Activated B cell treated with CpG ODN at 0.5 μM for 24 hours (primary cell): ENCODE measurements at regions of chr22 and their contacts with region 1.

Region 1: DNA sequence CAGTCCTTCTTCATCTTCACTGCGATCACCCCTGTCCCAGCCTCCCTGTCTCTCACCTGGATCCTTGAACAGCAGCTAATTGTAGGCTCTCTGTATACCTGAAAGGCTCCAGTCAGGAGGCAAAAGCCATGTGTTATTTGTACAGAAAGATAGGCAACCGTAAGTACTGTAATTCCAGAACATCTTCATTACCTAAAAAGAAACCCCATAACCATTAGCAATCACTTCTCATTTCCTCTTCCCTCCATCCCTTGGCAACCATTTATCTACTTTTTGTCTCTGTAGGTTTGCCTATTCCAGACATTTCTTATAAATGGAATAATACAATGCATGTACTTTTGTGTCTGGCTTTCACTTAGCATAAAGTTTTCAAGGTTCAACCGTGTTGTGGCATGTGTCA is 17.8 kb downstream of the NAGA start:
- DNase-seq: no peak
- ATAC-seq: no peak
- H3K4me3 Mint-ChIP-seq: no peak overlapping the region
- H3K27ac Mint-ChIP-seq: no peak overlapping the region
- H3K4me1 Mint-ChIP-seq: peaks cover 8% of the 10 kb centered on the region
- H3K27me3 Mint-ChIP-seq: no peaks in the 10 kb centered on the region
- CTCF ChIP-seq: no peak

Region 2: GRCh38 chr22:42016101-42016500 is 36.7 kb before region 1 on chr22:
- CTCF ChIA-PET with region 1: no interaction called
- POLR2A ChIA-PET with region 1: no interaction called
- intact Hi-C with region 1: loop called (anchors 5 kb)
- DNase-seq: no peak
- ATAC-seq: no peak
- H3K4me3 Mint-ChIP-seq: no peak overlapping the region
- H3K27ac Mint-ChIP-seq: no peak overlapping the region
- H3K4me1 Mint-ChIP-seq: peaks cover 7% of the 10 kb centered on the region
- H3K27me3 Mint-ChIP-seq: no peaks in the 10 kb centered on the region
- CTCF ChIP-seq: no peak

Region 3: DNA sequence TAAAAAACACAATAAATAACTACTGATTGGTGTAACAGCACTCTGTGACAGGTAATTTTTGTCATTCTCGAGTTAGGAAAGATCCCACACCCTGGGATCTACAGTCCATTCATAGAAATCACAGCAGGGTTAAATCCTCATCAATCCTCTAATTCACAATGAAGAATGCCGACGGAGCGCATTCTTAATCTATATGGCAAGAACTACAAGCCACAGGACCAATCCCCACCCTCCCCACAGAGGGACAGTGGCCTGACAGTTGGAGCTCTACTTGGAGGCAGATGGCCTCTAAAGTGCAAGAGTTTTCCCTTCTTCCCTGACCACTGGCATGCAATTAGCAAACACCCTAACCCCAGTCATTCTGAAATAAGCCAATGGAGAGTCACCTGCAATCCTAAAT is 183.5 kb after region 1 on chr22:
- CTCF ChIA-PET with region 1: no interaction called
- POLR2A ChIA-PET with region 1: no interaction called
- intact Hi-C with region 1: no loop called
- DNase-seq: no peak
- ATAC-seq: no peak
- H3K4me3 Mint-ChIP-seq: no peak overlapping the region
- H3K27ac Mint-ChIP-seq: no peak overlapping the region
- H3K4me1 Mint-ChIP-seq: peaks cover 39% of the 10 kb centered on the region
- H3K27me3 Mint-ChIP-seq: no peaks in the 10 kb centered on the region
- CTCF ChIP-seq: no peak